Dendritic cell treated with granulocyte-macrophage colony-stimulating factor and Interleukin-4, amounts not matched to agents 40 ng/mL and 50 ng/mL, for 4 days (primary cell): ENCODE measurements at regions of chr12 and their contacts with region 1.

Region 1: GRCh38 chr12:14167005-14167628 is 185.7 kb upstream of the GRIN2B start:
- H3K4me3 Mint-ChIP-seq: no peak overlapping the region
- H3K27ac Mint-ChIP-seq: no peak overlapping the region
- H3K4me1 Mint-ChIP-seq: no peaks in the 10 kb centered on the region
- H3K27me3 Mint-ChIP-seq: peaks cover 3% of the 10 kb centered on the region

Region 2: GRCh38 chr12:13278249-13278787 is 888.8 kb before region 1 on chr12:
- intact Hi-C with region 1: loop called (anchors 5 kb)
- H3K4me3 Mint-ChIP-seq: no peak overlapping the region
- H3K27ac Mint-ChIP-seq: no peak overlapping the region
- H3K4me1 Mint-ChIP-seq: peaks cover 6% of the 10 kb centered on the region
- H3K27me3 Mint-ChIP-seq: peaks cover 31% of the 10 kb centered on the region

Region 3: GRCh38 chr12:13362260-13362841 is 804.8 kb before region 1 on chr12:
- intact Hi-C with region 1: loop called (anchors 5 kb)
- H3K4me3 Mint-ChIP-seq: no peak overlapping the region
- H3K27ac Mint-ChIP-seq: no peak overlapping the region
- H3K4me1 Mint-ChIP-seq: no peaks in the 10 kb centered on the region
- H3K27me3 Mint-ChIP-seq: peaks cover 9% of the 10 kb centered on the region

Region 4: DNA sequence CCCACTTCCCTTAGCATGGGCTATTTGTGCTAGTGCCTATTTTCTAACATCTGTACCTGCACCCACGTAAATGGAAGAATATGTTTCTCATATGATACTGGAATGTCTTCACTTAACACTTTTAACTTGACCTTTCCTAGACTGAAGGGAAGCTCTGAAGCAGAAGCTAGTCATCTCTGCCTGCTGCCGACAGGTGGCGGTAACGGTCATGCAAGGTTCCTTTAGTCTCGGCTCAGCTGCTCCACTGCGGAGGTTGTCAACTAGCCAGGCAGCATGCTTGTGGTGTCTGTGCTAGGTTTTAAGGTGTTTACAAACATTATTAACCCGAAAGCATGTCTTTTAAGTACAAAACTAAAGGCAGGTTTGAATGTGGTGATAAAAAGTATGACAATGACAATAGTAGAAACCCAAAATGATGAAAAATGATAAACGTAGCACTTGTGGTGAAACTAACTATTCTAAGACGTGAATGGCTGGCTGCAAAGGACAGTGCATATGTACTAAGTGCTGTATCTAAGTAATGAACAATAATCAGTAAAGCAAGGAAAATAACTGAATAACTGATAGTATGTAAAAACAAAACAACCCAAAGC is 302.9 kb before region 1 on chr12:
- intact Hi-C with region 1: loop called (anchors 1 kb)
- H3K4me3 Mint-ChIP-seq: no peak overlapping the region
- H3K27ac Mint-ChIP-seq: no peak overlapping the region
- H3K4me1 Mint-ChIP-seq: no peaks in the 10 kb centered on the region
- H3K27me3 Mint-ChIP-seq: peaks cover 3% of the 10 kb centered on the region

Region 5: GRCh38 chr12:14207905-14208551 is 40.9 kb after region 1 on chr12:
- intact Hi-C with region 1: loop called (anchors 2 kb)
- H3K4me3 Mint-ChIP-seq: no peak overlapping the region
- H3K27ac Mint-ChIP-seq: no peak overlapping the region
- H3K4me1 Mint-ChIP-seq: no peaks in the 10 kb centered on the region
- H3K27me3 Mint-ChIP-seq: no peaks in the 10 kb centered on the region